ENCODE measurements at regions of chr16 and their contacts with region 1.

Region 1: GRCh38 chr16:29815793-29816693 is at the start of gene PAGR1:
- DNase-seq: peak; percentile 100
- H3K4me3 Mint-ChIP-seq: peak within 1 kb of the TSS; percentile 91
- H3K27ac Mint-ChIP-seq: peak within 1 kb of the TSS; percentile 94
- H3K4me1 Mint-ChIP-seq: peaks cover 62% of the 10 kb centered on the region
- H3K27me3 Mint-ChIP-seq: peaks cover 6% of the 10 kb centered on the region
- total RNA-seq, gene PAGR1: 25.8 and 27.0 TPM in 2 replicates

Region 2: DNA sequence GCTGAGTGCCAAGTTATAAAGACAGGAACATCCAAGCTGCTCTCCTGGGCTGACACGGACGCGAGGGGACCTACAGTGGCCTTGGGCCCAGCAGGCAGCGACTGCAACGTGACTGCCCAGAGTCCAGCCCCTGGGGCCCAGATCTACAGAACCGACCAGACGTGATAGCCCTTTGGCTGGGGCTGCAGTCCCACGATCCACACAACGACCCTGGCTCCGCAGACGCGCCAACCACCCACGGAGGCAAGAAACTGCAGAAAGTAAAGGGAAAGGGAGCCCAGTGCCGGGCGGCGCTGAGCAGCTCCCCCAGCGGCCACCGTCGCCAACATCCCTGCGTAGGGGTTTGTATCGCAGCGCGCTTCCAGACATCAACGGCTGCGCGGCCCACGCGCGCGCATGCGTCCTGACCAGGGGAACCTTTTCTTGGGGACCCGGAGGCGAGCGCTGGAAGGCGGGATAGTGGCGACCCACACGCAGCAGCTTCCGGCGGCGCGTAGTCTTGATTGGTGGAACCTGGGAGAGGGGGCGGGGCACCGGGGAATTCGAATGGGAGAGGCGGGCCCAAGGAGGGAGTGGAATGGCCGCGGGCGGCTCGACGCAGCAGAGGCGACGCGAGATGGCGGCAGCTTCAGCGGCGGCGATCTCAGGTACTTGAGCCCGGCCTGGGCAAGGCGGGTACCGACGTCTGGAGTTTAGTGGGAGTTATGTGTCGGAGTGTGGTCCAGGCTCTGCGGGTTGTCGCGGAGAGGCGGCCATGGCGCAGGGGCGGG is 25.7 kb before region 1 on chr16 and contains the start of gene KIF22:
- intact Hi-C with region 1: loop called (anchors 1 kb)
- DNase-seq: peak; percentile 100
- H3K4me3 Mint-ChIP-seq: peak within 1 kb of the TSS; percentile 99
- H3K27ac Mint-ChIP-seq: peak within 1 kb of the TSS; percentile 95
- H3K4me1 Mint-ChIP-seq: peaks cover 37% of the 10 kb centered on the region
- H3K27me3 Mint-ChIP-seq: no peaks in the 10 kb centered on the region
- total RNA-seq, gene KIF22: 132 TPM in 2 replicates

Region 3: DNA sequence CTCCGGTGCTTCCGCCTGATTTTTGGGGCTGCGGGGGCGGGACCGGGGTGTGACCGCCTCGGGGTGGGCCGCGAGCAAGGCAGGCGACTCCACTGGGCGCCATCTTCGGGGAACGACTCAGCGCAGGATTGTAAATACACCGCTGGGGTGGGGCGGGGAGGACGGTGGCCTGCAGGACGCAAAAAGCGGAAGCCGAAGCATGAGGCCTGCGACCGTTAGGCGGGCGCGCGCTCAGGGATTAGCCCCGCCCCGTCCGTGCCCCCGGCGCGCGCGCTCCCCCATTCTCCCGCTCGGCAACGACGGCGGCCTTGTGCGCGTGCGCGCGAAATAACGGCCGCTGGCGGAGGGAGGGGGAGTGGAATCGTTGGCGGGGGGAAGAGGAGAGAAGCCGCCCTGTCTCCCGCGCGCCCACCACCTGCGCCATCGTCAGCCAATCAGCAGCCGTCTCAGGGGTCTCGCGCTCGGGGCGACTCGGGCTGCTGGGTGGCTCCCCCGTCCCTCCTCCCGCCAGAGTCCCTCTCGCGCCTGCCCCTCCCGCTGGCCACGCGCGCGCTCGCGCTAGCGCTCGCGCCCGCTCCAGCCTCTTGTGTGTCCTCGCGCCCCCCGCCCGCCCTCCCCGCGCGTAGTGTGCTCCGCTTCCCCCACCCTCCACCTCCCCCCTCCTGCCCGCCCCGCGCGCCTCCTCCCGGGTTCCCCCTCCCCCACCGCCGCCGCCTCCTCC is 10.5 kb before region 1 on chr16:
- intact Hi-C with region 1: loop called (anchors 1 kb)
- DNase-seq: peak; percentile 99
- H3K4me3 Mint-ChIP-seq: peak overlapping the region; percentile 96
- H3K27ac Mint-ChIP-seq: peak overlapping the region; percentile 99
- H3K4me1 Mint-ChIP-seq: peaks cover 42% of the 10 kb centered on the region
- H3K27me3 Mint-ChIP-seq: no peaks in the 10 kb centered on the region

Region 4: DNA sequence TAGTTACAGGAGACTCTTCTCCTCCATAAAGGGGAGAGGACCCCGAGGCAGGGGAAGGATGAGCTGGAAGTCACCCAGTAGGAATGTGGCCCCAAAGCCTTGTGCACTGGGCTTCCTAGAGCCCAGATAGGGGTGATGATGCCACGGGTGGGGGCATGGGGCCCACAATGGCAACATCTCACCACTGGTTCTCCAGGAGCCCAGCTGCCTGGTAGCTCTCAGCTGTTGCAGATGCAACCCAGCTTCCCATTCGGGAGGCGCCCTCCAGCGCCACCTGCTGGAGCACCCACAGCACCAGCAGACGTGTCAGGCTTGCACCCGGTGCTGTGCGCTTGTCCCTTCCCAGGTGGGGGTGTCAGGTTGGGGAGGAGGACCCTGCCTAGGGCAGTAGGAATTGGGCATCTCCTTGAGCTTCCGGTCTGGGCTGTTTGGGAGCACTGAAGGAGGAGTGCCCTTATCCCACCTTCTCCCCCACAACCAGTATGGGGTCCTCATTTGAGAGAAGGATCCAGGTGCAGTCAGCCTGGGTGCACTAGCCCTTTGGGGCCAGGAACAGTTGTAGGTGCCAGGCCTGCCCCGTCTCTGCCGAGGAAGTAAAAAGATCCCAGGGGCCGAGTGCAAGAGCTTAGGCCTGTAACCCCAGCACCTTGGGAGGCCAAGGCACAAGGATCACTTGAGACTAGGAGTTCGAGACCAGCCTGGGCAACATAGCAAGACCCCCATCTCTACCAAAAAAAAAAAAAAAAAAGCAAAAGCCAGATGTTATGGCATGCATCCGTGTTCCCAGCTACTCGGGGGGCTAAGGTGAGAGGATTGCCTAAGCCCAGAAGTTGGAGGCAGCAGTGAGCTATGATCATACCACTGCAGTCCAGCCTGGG is 32.6 kb after region 1 on chr16:
- intact Hi-C with region 1: loop called (anchors 1 kb)
- DNase-seq: peak; percentile 95
- H3K4me3 Mint-ChIP-seq: no peak overlapping the region
- H3K27ac Mint-ChIP-seq: no peak overlapping the region
- H3K4me1 Mint-ChIP-seq: peaks cover 2% of the 10 kb centered on the region
- H3K27me3 Mint-ChIP-seq: no peaks in the 10 kb centered on the region

Region 5: GRCh38 chr16:29951625-29952365 is 135.8 kb after region 1 on chr16:
- intact Hi-C with region 1: no loop called
- DNase-seq: no peak
- H3K4me3 Mint-ChIP-seq: no peak overlapping the region
- H3K27ac Mint-ChIP-seq: no peak overlapping the region
- H3K4me1 Mint-ChIP-seq: no peaks in the 10 kb centered on the region
- H3K27me3 Mint-ChIP-seq: peaks cover 5% of the 10 kb centered on the region

Region 6: GRCh38 chr16:29973384-29974246 is 157.6 kb after region 1 on chr16 and contains the start of gene TAOK2:
- intact Hi-C with region 1: loop called (anchors 2 kb)
- DNase-seq: peak; percentile 99
- H3K4me3 Mint-ChIP-seq: peak within 1 kb of the TSS; percentile 91
- H3K27ac Mint-ChIP-seq: peak within 1 kb of the TSS; percentile 95
- H3K4me1 Mint-ChIP-seq: peaks cover 30% of the 10 kb centered on the region
- H3K27me3 Mint-ChIP-seq: no peaks in the 10 kb centered on the region
- total RNA-seq, gene TAOK2: 35.8 and 38.7 TPM in 2 replicates

Region 7: DNA sequence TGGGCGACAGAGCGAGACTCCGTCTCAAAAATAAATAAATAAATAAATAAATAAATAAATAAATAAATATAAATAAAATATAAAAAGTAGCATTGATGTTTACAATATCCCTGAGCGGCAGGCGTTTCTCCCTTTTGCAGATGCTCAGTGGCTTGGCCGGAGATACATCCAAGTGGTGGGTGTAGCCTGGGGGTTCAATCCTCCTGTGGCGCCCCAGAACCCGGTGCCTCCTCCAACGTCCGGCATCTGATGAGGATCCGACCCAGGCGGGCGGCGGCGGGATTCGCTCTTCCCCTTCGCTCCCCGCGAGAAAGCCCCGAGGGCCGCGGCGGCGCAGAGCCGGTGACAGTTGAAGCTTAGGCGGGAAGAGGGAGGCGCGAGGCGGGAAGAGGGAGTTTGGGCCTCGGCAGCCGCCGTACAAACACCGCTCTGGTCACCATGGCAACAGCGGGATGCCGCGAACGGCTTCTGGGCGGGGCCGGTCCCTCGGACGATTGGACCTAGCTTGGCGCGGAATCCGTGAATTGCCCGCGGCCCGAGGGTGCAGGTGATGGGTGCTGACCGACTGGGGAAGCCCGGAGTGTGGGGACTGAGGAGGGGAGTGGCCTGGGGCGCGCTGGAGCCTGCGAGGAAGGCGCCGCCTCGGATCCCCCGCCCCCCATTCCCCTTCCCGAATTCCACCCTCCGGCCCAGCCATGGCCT is 236.8 kb after region 1 on chr16:
- intact Hi-C with region 1: loop called (anchors 10 kb)
- DNase-seq: peak; percentile 98
- H3K4me3 Mint-ChIP-seq: peak overlapping the region; percentile 87
- H3K27ac Mint-ChIP-seq: peak overlapping the region; percentile 81
- H3K4me1 Mint-ChIP-seq: peaks cover 31% of the 10 kb centered on the region
- H3K27me3 Mint-ChIP-seq: no peaks in the 10 kb centered on the region

Measured in activated CD4-positive, alpha-beta T cell treated with anti-CD3 and anti-CD28 coated beads, Interleukin-2, amount 10 ng/mL, durations not matched to agents 24 days and 14 days (primary cell).